Right ventricle myocardium inferior (tissue), 1 donor: ENCODE measurements at regions of chr4 and their contacts with region 1.

Region 1: GRCh38 chr4:83535520-83536361 is at the start of gene GPAT3:
- DNase-seq: peak; percentile 92
- ATAC-seq: peak; percentile 93
- total RNA-seq, gene GPAT3: 33.8 TPM

Region 2: DNA sequence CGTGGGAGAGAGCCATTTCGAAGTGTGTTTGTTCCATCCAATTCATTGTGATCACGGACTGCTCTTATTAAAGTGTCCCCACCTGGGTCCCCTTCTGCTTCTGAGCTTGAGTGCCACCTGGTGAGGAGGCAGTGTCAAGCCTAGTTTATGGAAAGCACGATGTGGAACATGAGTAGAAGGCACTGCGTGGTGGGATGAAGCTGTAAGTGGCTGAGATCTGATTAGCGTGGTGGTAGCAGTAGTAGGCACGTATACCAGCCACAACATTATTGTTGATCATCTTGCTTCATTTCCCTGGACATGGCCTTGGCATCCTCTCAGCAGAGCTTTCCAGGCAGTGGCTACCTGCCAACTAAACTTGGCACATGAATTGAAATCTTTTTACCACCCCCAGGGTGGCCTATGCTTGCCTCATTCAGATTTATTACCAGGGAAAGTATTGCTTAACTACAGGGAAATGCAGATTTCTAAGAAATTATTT is 46.6 kb after region 1 on chr4:
- intact Hi-C with region 1: loop called (anchors 2 kb)
- DNase-seq: no peak
- ATAC-seq: peak; percentile 83

Region 3: DNA sequence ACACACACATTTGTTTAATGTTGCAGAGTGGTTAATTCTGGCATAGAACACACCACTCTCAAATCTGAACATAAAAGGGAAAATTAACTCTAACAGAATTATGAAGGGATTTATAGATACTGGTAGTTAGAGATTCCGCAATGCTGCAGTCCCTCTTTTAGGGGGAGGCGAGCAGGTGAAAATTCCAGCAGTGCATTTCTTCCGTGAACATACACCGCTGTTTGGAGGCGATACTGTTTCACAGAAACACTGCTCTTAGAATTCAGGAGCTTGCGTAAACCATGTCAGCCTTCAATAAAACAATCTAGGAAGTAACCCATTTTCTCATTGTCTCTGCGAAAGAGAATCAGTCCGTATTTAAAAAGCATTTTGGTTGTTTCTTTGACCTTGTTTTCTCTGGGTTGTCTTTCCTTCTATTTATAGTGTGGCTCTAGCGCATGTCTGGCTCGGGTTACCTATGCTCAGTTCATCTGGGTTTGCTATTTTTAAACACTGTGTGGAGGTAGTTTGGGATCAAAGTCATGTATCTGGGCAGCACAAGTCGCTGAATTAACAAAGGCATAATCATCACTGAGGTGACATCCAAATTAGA is 90.6 kb after region 1 on chr4:
- intact Hi-C with region 1: loop called (anchors 2 kb)
- DNase-seq: no peak
- ATAC-seq: peak; percentile 79